GM23248 (cell line): ENCODE measurements at regions of chr2 and their contacts with region 1.

Region 1: DNA sequence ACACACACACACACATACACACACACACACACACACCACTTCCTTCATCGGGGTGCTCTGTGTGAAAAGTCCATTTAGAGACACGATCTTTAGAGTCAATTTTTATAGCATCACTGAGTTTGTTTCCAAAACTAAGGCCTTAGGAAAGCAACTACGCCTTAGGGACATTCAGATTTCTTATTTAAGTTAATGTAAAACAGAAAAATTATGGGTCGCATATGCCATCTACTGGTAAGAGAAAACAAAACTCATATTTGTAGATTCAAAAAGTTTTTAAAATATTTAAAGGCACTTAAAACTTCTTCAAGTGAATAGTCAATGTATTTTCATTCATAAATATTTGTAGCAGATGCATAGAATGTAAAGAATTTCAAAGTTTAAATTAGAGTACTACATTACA is 166.2 kb downstream of the ATAD2B start:
- DNase-seq: peak; percentile 72
- H3K4me3 ChIP-seq: no peak overlapping the region
- H3K27ac ChIP-seq: no peak overlapping the region
- H3K4me1 ChIP-seq: peaks cover 21% of the 10 kb centered on the region
- H3K27me3 ChIP-seq: no peaks in the 10 kb centered on the region

Region 2: GRCh38 chr2:22826703-22827102 is 934.0 kb before region 1 on chr2:
- in situ Hi-C with region 1: no loop called
- DNase-seq: no peak
- H3K4me3 ChIP-seq: no peak overlapping the region
- H3K27ac ChIP-seq: no peak overlapping the region
- H3K4me1 ChIP-seq: no peaks in the 10 kb centered on the region
- H3K27me3 ChIP-seq: no peaks in the 10 kb centered on the region

Region 3: GRCh38 chr2:23384551-23385349 is 376.0 kb before region 1 on chr2 and contains the start of gene KLHL29:
- in situ Hi-C with region 1: loop called (anchors 25 kb)
- DNase-seq: peak; percentile 90
- H3K4me3 ChIP-seq: peak within 1 kb of the TSS; percentile 81
- H3K27ac ChIP-seq: peak within 1 kb of the TSS; percentile 44; the same call in 1 of the 2 replicates
- H3K4me1 ChIP-seq: peaks cover 10% of the 10 kb centered on the region
- H3K27me3 ChIP-seq: no peaks in the 10 kb centered on the region
- total RNA-seq, gene KLHL29: 4.7 and 6.4 TPM in 2 replicates